Endothelial cell of umbilical vein (primary cell): ENCODE measurements at regions of chr17 and their contacts with region 1.

Region 1: DNA sequence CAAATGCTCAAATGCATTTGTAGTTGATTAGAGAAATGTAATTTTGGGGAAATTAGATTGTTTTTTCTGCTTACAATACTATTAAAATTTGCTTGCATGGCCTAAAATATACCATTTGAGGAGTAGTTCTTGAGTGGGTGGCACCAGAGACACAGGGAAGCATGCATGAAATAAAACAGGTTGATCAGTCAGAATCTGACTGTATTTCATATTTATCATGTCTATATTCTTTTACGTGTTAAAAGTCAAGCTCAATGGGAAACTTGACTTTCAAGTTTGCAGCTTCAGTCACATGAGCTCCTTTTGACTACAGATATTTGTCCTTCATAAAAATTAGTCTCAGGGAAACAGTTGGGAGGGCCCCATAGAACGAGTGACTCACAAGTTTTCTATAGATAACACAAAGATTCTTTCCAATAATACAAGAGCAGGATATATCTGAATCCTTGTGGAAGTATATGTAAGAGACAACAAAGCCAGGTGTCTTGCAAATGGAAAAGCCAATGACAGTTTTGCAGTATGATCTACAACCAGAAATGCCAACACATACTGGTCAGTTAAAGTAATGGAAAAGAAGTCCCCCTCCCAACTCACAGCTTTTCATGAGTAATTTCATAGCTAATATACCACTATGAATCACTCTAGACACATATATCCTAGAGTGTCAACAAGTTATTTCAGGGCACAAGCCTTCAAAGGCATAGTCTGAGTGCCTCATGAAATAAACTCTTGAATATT is 42.2 kb upstream of the CORO6 start:
- DNase-seq: peak; percentile 93
- H3K4me3 ChIP-seq: no peak overlapping the region
- H3K27ac ChIP-seq: peak overlapping the region; percentile 93
- H3K4me1 ChIP-seq: peaks cover 27% of the 10 kb centered on the region
- H3K27me3 ChIP-seq: no peaks in the 10 kb centered on the region
- CTCF ChIP-seq: no peak
- POLR2A ChIP-seq: no peak

Region 2: DNA sequence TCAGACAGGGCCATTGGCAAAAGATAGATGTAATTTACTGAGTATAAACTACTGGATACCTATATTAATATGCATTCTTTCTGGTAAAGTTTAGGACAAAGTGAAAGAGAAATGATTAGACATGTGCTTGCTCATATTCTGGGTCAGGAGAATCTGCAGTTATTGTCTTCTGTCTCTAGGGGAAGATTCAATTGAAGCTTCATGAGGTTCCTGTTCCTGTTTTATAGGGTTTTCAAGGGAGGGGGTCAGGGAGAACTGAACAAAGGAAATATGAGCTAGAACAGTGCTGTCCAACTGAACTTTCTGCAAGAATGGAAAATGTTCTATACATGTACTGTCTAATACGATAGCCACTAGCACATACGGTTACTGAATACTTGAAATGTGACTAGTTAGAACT is 17.1 kb after region 1 on chr17:
- CTCF ChIA-PET with region 1: interaction called, 25 read pairs
- POLR2A ChIA-PET with region 1: no interaction called
- dilution Hi-C with region 1: no loop called
- intact Hi-C with region 1: no loop called
- DNase-seq: peak; percentile 41
- H3K4me3 ChIP-seq: no peak overlapping the region
- H3K27ac ChIP-seq: peak overlapping the region; percentile 91
- H3K4me1 ChIP-seq: peaks cover 33% of the 10 kb centered on the region
- H3K27me3 ChIP-seq: no peaks in the 10 kb centered on the region
- CTCF ChIP-seq: no peak
- POLR2A ChIP-seq: no peak